Colonic mucosa (tissue), 4 donors: ENCODE measurements at regions of chr3 and their contacts with region 1.

Region 1: GRCh38 chr3:160027541-160028195 is 39.0 kb downstream of the IL12A start:
- DNase-seq: no peak
- H3K4me3 ChIP-seq: no peak overlapping the region
- H3K27ac ChIP-seq: no peak overlapping the region
- H3K4me1 ChIP-seq: no peaks in the 10 kb centered on the region
- H3K27me3 ChIP-seq: no peaks in the 10 kb centered on the region
- CTCF ChIP-seq: no peak

Region 2: DNA sequence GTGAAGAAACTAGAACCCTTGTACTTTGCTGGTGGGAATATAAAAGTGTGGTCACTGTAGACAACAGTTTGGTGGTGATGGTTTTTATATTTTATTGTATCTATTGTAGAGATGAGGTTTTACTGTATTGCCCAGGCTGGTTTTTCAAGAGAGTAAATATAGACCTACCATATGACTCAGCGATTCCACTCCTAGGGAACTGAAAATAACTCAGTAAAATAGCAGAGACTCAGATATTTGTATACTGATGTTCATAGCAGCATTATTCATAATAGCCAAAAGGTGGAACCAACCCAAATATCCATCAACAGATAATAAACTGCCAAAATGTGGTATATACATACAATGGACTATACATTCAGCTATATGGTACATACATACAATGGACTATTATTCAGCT is 107.8 kb before region 1 on chr3:
- intact Hi-C with region 1: no loop called
- DNase-seq: no peak
- H3K4me3 ChIP-seq: no peak overlapping the region
- H3K27ac ChIP-seq: no peak overlapping the region
- H3K4me1 ChIP-seq: no peaks in the 10 kb centered on the region
- H3K27me3 ChIP-seq: no peaks in the 10 kb centered on the region
- CTCF ChIP-seq: no peak

Region 3: DNA sequence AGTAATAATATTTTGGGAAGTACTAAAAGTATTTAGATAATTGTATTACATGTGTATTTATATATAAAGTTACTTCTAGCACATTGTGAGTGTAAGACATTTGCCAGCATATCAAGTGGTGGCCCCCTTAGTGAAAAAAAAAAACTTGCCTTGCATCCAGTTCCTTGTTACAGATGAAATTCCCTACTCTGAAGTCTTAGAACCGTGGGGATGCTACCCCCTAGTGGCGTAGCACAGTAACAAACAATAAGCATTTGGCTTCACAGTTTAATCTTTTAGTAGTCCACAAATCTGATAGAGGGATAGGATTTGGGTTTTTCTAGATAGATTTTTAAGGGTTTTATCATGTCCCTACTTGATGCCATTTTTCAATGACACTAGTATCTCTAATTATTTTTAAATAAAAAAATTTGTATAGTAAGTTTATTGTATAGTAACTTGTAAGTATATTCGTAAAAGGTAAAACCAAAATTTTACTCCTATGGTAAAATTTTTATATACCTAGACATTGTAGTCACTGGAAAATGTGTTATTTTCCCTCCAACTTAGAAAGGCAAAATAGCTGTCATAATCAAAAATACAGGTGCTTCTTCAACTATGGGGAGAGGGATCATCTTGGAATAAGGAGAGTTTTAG is 386.1 kb after region 1 on chr3:
- intact Hi-C with region 1: loop called (anchors 5 kb)
- DNase-seq: peak; percentile 64
- H3K4me3 ChIP-seq: no peak overlapping the region
- H3K27ac ChIP-seq: no peak overlapping the region
- H3K4me1 ChIP-seq: no peaks in the 10 kb centered on the region
- H3K27me3 ChIP-seq: no peaks in the 10 kb centered on the region
- CTCF ChIP-seq: peak; percentile 90

Region 4: GRCh38 chr3:160629491-160629890 is 601.8 kb after region 1 on chr3:
- intact Hi-C with region 1: no loop called
- DNase-seq: no peak
- H3K4me3 ChIP-seq: no peak overlapping the region
- H3K27ac ChIP-seq: no peak overlapping the region
- H3K4me1 ChIP-seq: no peaks in the 10 kb centered on the region
- H3K27me3 ChIP-seq: no peaks in the 10 kb centered on the region
- CTCF ChIP-seq: no peak